H1 (cell line): ENCODE measurements at regions of chr1 and their contacts with region 1.

Region 1: DNA sequence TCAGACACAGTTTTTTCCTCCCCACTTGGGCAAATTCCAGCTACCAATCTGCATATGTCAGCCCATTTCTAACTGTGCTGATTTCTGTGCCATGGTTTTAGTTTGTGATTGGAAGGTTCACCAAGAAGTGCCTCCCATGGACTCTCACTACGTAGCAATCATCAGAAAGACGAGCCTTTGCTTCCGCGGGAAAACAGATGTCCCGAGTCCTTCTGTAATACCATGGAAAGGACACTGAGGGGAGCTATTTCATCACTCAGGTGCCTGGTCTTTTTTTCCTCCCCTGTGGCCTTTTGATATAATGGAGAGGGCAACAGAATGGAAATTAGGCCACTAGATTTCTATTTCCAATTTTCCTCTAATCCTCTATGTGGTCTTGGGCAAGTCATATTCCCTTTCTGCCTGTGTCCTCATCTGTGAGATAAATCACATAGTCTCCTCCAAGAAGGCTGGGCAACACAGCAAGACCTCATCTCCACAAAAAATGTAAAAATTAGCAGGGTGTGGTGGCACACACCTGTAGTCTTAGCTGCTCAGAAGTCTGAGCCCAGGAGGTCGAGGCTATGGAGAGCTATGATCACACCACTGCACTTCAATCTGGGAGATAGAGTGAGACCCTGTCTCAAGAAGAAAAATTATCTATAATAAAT is 24.8 kb downstream of the LEMD1 start:
- DNase-seq: no peak
- H3K4me3 ChIP-seq: no peak overlapping the region
- H3K27ac ChIP-seq: no peak overlapping the region
- H3K4me1 ChIP-seq: no peaks in the 10 kb centered on the region
- H3K27me3 ChIP-seq: no peaks in the 10 kb centered on the region
- CTCF ChIP-seq: peak; percentile 27 to 93 (median 90)
- EP300 ChIP-seq: 0 out of 3 replicates have a peak, but pooled peaks of 1 of the 2 experiments have one; percentile 20
- POLR2A ChIP-seq: no peak
- RAD21 ChIP-seq: peak; percentile 99 to 100

Region 2: GRCh38 chr1:205301842-205302588 is 95.1 kb before region 1 on chr1:
- CTCF ChIA-PET with region 1: no interaction called
- POLR2A ChIA-PET with region 1: no interaction called
- DNase-seq: no peak
- H3K4me3 ChIP-seq: peak overlapping the region in 1 of 4 experiments; percentile 34; a peak in 3 of 8 replicates
- H3K27ac ChIP-seq: peak overlapping the region; percentile 98
- H3K4me1 ChIP-seq: peaks cover 21 to 38% (median 31%) of the 10 kb centered on the region in 4 experiments
- H3K27me3 ChIP-seq: no peaks in the 10 kb centered on the region; a peak in 1 of 7 replicates
- CTCF ChIP-seq: no peak
- EP300 ChIP-seq: no peak
- POLR2A ChIP-seq: no peak
- RAD21 ChIP-seq: no peak

Region 3: GRCh38 chr1:205382561-205382960 is 14.5 kb before region 1 on chr1:
- CTCF ChIA-PET with region 1: interaction called, 76 read pairs
- POLR2A ChIA-PET with region 1: interaction called, 3 read pairs
- DNase-seq: peak in 1 of 2 experiments; percentile 44
- H3K4me3 ChIP-seq: no peak overlapping the region
- H3K27ac ChIP-seq: no peak overlapping the region
- H3K4me1 ChIP-seq: peaks cover 0 to 3% (median 0%) of the 10 kb centered on the region in 4 experiments; a peak in 1 of 7 replicates
- H3K27me3 ChIP-seq: no peaks in the 10 kb centered on the region
- CTCF ChIP-seq: no peak
- EP300 ChIP-seq: no peak
- POLR2A ChIP-seq: no peak
- RAD21 ChIP-seq: no peak

Region 4: GRCh38 chr1:205422993-205423625 is 26.0 kb after region 1 on chr1:
- CTCF ChIA-PET with region 1: interaction called, 12 read pairs
- POLR2A ChIA-PET with region 1: no interaction called
- DNase-seq: no peak
- H3K4me3 ChIP-seq: no peak overlapping the region
- H3K27ac ChIP-seq: no peak overlapping the region
- H3K4me1 ChIP-seq: peaks cover 0 to 7% (median 2%) of the 10 kb centered on the region in 4 experiments; a peak in 4 of 7 replicates
- H3K27me3 ChIP-seq: no peaks in the 10 kb centered on the region; a peak in 2 of 7 replicates
- CTCF ChIP-seq: peak in 1 of 3 experiments; percentile 13; a peak in 1 of 4 replicates
- EP300 ChIP-seq: no peak
- POLR2A ChIP-seq: no peak
- RAD21 ChIP-seq: peak; percentile 7 to 20; a peak in 3 of 4 replicates

Region 5: DNA sequence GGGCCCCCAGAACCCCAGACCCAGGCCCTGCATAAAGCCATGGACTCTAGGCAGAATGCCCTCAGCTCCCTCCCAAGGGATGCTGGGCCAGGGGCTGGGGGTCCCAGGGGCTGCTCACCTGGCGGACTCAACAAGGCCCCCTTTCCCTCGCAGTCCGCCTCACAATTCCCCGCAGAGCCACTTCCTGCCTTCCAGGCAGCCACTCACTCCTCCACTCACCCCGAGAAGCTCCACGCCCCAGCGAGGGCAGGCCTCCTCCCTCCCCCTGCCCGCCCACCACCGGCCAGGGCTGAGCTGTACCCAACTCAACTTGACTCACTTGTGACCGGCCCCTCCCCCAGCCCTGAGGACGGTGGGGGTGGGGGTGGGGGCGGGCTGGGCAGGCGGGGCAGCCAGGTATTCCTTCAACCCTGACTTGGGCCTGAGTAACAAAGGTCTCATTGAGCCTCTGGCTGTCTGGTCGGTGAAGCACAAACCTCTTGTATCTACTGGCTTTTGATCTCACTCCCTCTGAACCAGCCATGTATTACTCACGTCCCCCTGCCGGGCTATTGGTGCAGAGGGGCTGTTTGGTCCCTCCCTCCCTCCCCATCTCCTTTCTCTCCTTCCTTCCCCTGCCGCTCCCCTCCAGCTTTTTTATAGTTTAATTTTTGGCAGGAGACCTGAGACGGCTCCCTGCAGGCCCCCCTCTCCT is 52.8 kb after region 1 on chr1:
- CTCF ChIA-PET with region 1: interaction called, 19 read pairs
- POLR2A ChIA-PET with region 1: interaction called, 3 read pairs
- DNase-seq: peak in 1 of 2 experiments; percentile 77
- H3K4me3 ChIP-seq: peak overlapping the region; percentile 14 to 52 (median 28); a peak in 5 of 8 replicates
- H3K27ac ChIP-seq: no peak overlapping the region; the same call in 1 of the 2 replicates
- H3K4me1 ChIP-seq: peaks cover 46 to 88% (median 62%) of the 10 kb centered on the region in 4 experiments
- H3K27me3 ChIP-seq: peaks cover 0 to 5% (median 1%) of the 10 kb centered on the region in 4 experiments; a peak in 2 of 7 replicates
- CTCF ChIP-seq: peak in 1 of 3 experiments; percentile 4; a peak in 1 of 4 replicates
- EP300 ChIP-seq: no peak
- POLR2A ChIP-seq: peak in 1 of 2 experiments; percentile 45; a peak in 1 of 3 replicates
- RAD21 ChIP-seq: no peak

Region 6: DNA sequence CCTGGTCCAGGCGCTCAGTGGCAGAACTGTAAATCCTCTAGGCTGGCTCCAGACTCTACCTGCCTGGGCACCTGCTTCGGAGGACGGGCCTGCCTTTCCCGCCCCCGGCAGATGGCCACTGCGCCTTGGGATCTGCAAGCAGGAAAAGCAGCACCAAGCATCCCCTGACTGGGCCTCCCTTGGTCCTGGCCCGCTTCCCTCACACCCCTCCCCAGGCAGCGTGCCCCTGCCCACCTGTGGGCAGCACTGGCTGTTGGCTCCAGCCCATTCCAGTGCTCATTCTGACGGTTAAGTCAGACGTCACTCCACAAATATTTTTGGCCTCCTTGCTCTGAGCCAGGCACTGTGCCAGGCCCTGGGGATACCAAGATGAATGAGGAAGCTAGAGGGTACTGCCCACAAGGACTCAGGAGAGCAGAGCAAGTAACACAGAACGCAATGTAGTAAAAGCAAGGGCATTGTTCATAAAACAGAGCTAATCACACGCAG is 80.7 kb after region 1 on chr1:
- CTCF ChIA-PET with region 1: interaction called, 19 read pairs
- POLR2A ChIA-PET with region 1: no interaction called
- DNase-seq: no peak
- H3K4me3 ChIP-seq: no peak overlapping the region
- H3K27ac ChIP-seq: no peak overlapping the region
- H3K4me1 ChIP-seq: peaks cover 0 to 29% (median 19%) of the 10 kb centered on the region in 4 experiments; a peak in 6 of 7 replicates
- H3K27me3 ChIP-seq: peaks cover 0 to 2% (median 0%) of the 10 kb centered on the region in 4 experiments; a peak in 3 of 7 replicates
- CTCF ChIP-seq: no peak
- EP300 ChIP-seq: no peak
- POLR2A ChIP-seq: no peak
- RAD21 ChIP-seq: no peak